Activated CD4-positive, alpha-beta T cell treated with anti-CD3 and anti-CD28 coated beads for 36 hours (primary cell): ENCODE measurements at regions of chr9 and their contacts with region 1.

Region 1: GRCh38 chr9:113578882-113579282 is 115.4 kb downstream of the RGS3 start:
- DNase-seq: peak; percentile 94
- ATAC-seq: peak; percentile 66
- H3K4me3 Mint-ChIP-seq: peak overlapping the region; percentile 81
- H3K27ac Mint-ChIP-seq: peak overlapping the region; percentile 86
- H3K4me1 Mint-ChIP-seq: peaks cover 66% of the 10 kb centered on the region
- H3K27me3 Mint-ChIP-seq: no peaks in the 10 kb centered on the region

Region 2: DNA sequence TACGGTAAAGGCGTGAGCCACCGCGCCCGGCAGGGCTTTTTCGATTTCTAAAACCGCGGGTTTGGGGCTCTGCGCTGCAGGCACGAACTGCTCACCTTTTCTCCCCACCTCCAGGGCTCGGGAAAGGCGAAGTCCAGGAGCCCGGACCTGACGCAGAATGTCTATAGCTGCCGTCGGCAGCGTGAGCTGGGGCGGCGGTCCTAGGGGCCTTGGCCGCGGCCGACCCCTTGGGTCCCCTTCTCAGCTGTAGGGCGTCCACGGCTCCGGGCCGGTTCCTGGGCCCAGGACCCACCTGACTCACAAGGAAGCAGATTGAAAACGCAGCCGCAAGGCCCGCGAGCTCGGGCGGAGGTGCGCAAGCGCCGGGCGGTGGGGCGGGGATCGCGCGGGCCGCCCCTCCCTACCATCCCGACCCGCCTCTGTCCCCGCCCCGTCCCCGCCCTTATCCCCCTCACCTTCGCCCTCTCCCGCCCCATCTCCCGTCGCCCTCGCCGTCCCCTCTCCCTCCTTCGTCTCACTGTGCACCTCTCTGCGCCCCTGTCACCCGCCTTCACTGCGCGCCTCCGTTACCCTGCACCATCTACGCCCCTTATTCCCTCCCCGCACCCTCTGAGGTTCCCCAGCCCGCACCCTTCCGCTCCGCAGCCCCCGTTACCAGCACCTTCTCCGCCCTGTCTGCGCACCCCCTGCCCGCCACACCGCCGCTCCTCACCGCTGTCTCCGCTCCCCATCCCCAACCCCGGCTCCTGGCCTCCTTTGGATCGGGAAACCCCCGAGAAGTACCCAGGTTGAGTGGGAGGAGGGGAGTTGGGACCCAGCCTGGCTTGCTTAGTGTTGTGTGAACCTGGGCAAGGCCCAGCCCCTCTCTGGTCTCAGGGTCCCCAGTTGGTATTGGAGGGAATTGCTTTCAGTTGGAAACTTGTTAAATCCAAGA is 202.0 kb before region 1 on chr9 and contains the start of gene HDHD3:
- CTCF ChIA-PET with region 1: no interaction called
- POLR2A ChIA-PET with region 1: no interaction called
- intact Hi-C with region 1: loop called in 1 of 2 experiments (anchors 1 kb)
- DNase-seq: peak; percentile 90
- ATAC-seq: peak; percentile 89
- H3K4me3 Mint-ChIP-seq: peak within 1 kb of the TSS; percentile 88
- H3K27ac Mint-ChIP-seq: peak within 1 kb of the TSS; percentile 89
- H3K4me1 Mint-ChIP-seq: peaks cover 17% of the 10 kb centered on the region
- H3K27me3 Mint-ChIP-seq: no peaks in the 10 kb centered on the region
- total RNA-seq, gene HDHD3: 12.7 to 16.5 TPM

Region 3: DNA sequence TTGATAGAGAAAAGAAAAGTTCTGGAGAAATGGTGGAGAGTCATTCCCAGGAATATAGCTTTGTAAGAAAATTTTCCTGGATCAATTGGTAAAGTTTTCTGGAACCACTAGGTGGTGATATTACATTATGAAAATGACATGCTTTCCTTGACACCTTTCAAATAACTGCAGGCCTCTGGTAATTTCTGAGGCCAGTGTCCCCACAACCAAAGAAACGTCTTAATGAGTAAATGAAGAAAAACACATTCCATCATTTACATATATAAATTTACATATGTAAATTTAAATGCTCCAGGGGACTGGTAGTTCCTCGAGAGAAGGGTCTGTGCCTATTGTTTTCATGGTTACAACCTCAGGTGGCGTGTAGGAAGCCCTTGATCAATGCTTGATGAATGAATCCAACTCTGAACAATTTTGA is 132.6 kb before region 1 on chr9:
- CTCF ChIA-PET with region 1: interaction called, 16 read pairs
- POLR2A ChIA-PET with region 1: no interaction called
- intact Hi-C with region 1: loop called in 1 of 2 experiments (anchors 2 kb)
- DNase-seq: peak; percentile 28
- ATAC-seq: peak; percentile 47
- H3K4me3 Mint-ChIP-seq: no peak overlapping the region
- H3K27ac Mint-ChIP-seq: no peak overlapping the region
- H3K4me1 Mint-ChIP-seq: peaks cover 3% of the 10 kb centered on the region
- H3K27me3 Mint-ChIP-seq: no peaks in the 10 kb centered on the region

Region 4: DNA sequence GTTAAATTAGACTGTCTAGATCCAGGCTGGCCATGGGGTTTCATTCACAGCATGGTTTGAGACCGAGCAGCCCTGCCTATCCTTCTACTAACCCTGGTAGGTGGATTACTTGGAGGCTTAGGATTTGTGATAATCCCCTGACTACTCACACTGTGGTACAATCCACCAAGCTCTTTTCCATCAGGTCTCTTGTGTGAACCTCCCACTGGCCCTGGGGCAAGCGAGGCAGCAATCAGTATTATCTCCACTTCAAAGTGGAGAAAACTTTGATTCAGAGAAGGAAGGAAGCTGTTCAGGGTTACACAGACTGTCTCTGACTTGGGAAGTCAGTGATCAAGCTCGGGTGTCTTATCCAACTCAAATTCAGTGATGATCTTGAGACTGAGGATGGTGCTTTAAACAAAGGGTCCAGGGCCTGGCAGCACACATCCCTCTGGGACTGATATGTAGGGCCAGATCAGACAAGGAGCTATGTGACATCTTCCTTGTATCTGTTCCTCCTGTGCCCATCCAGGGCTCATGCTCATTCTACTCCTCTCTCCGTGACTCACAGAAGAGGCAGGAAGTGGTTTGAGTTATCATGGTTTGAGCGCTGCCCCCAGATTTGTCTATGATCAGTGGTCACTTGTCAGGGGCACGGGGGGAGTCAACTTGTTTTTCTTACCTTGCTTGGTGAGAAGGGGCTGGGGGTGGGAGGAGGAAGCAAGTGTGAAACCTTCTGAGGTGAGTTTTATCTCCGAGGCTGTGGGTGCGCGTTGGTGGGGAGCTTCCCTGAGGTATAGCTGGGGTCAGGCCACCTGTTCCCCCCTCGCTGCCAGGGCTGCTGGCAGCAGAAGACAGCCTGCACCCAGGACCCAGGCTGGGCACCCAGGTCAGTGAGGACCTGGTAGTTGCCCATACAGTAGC is 66.8 kb before region 1 on chr9:
- CTCF ChIA-PET with region 1: interaction called, 7 read pairs
- POLR2A ChIA-PET with region 1: interaction called, 6 read pairs
- intact Hi-C with region 1: loop called (anchors 1 kb)
- DNase-seq: peak; percentile 84
- ATAC-seq: peak; percentile 72
- H3K4me3 Mint-ChIP-seq: peak overlapping the region; percentile 57
- H3K27ac Mint-ChIP-seq: peak overlapping the region; percentile 93
- H3K4me1 Mint-ChIP-seq: peaks cover 58% of the 10 kb centered on the region
- H3K27me3 Mint-ChIP-seq: no peaks in the 10 kb centered on the region

Region 5: DNA sequence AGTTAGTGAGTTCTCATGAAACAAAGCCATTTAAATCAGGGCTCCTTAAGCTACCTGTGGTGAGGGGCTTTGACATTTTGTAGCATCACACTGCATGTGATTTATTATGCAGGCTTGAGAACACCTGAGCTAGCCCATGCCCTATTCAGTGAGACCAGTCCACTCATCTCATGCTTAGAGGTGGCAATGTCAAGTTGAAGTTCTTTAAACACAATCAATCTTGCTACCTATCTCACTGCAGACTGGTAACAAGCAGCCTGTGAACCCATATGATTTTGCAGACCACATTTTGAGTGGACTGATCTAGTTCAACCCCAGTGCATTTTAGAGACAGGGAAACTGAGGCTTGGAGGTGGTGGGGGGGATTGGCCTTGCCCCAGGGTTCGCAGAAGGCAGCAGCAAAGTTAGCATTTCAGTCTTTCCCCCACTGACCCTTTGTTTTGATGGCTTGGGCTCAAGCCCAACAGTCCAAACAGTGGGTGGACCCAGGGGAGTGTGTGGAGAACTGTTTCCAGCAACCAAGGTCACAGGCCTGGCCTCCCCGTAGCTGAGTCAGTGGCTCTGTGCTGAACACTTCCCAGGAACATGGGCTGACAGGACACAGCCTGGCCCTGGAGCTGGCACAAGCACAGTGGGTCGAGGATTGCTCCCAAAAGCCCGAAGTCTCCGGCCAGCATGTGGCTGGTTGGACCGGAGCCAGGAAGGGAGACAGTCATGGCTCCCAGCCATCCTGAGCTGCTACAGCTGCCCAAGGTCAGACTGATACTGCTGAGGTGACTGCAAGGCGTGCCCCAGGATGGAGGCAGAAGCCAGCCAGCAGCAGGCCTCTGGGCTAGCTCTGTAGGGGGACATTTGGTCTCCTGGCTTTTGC is 20.0 kb before region 1 on chr9:
- CTCF ChIA-PET with region 1: interaction called, 4 read pairs
- POLR2A ChIA-PET with region 1: no interaction called
- intact Hi-C with region 1: loop called (anchors 1 to 2 kb)
- DNase-seq: no peak
- ATAC-seq: no peak
- H3K4me3 Mint-ChIP-seq: no peak overlapping the region
- H3K27ac Mint-ChIP-seq: no peak overlapping the region
- H3K4me1 Mint-ChIP-seq: peaks cover 34% of the 10 kb centered on the region
- H3K27me3 Mint-ChIP-seq: no peaks in the 10 kb centered on the region

Region 6: GRCh38 chr9:113622600-113623400 is 43.9 kb after region 1 on chr9:
- CTCF ChIA-PET with region 1: interaction called, 4 read pairs
- POLR2A ChIA-PET with region 1: interaction called, 4 read pairs
- intact Hi-C with region 1: loop called (anchors 1 to 2 kb)
- DNase-seq: peak; percentile 90
- ATAC-seq: peak; percentile 92
- H3K4me3 Mint-ChIP-seq: peak overlapping the region; percentile 58
- H3K27ac Mint-ChIP-seq: peak overlapping the region; percentile 98
- H3K4me1 Mint-ChIP-seq: peaks cover 57% of the 10 kb centered on the region
- H3K27me3 Mint-ChIP-seq: no peaks in the 10 kb centered on the region